ENCODE measurements at regions of chr18 and their contacts with region 1.

Region 1: DNA sequence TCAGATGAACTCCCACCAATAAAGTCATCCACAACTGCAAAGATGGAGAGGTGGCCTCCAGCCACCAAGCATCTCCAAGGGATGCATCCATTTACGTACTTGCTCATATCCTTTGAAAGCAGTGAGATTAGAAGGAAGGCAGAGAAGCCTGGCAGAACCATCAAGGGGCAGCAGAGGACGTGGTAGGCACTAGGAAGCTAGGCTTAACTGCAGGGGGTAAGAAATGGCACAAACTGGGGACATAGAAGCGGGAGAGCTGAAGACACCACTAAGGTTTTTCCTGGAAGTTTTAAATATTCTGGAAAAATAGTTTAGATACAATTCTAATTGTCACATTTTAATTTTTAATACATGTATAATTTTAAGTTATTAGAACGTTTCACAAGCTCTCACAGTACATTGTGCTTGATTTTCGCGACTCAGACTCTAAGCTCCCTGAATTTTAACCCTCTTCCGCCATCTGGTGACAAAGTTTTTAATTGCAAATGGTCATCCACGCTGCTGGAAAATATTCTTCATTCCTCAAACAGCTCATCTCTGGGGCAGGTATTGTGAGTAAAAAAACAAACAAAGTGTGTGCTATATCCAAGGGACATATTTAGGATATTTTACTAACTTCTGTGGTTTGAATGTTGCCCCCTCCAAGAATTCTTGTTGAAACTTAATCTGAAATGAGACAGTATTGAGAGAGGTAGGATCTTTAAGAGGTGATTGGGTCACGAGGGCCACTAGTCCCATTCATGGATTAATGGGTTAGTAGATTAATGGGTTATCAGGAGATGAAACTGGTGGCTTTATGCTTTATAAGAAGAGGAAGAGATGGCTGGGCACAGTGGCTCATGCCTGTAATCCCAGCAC is 1.6 kb upstream of the PSTPIP2 start:
- DNase-seq: peak; percentile 75 to 84 (median 77)
- H3K4me3 ChIP-seq: peak overlapping the region in 2 of 7 experiments; percentile 1 to 31
- H3K27ac ChIP-seq: no peak overlapping the region
- H3K4me1 ChIP-seq: peaks cover 2 to 41% (median 33%) of the 10 kb centered on the region in 4 experiments
- H3K27me3 ChIP-seq: no peaks in the 10 kb centered on the region

Region 2: DNA sequence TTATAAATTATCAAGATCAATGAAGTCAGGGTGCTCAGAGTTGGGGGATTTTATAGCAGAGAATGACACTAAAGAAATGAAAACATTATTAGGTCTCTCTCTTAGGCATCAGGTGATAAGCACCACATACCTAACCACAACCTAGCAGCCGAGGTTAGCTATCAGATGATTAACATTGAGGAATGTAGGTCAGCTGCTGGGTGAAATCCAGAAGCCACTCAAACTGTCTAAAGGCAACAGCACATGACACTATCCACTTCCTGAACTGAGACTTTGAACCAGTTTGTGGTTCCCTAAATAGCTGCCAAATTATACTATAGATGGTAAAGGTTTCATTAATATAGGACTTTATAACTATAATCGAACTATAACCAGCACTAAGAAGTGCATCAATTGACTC is 111.2 kb before region 1 on chr18:
- CTCF ChIA-PET with region 1: interaction called, 11 read pairs
- POLR2A ChIA-PET with region 1: no interaction called
- DNase-seq: peak; percentile 48 to 93 (median 88)
- H3K4me3 ChIP-seq: peak overlapping the region in 2 of 7 experiments; percentile 11 to 38
- H3K27ac ChIP-seq: peak overlapping the region in 1 of 2 experiments; percentile 69
- H3K4me1 ChIP-seq: peaks cover 10 to 30% (median 21%) of the 10 kb centered on the region in 4 experiments
- H3K27me3 ChIP-seq: no peaks in the 10 kb centered on the region

Region 3: DNA sequence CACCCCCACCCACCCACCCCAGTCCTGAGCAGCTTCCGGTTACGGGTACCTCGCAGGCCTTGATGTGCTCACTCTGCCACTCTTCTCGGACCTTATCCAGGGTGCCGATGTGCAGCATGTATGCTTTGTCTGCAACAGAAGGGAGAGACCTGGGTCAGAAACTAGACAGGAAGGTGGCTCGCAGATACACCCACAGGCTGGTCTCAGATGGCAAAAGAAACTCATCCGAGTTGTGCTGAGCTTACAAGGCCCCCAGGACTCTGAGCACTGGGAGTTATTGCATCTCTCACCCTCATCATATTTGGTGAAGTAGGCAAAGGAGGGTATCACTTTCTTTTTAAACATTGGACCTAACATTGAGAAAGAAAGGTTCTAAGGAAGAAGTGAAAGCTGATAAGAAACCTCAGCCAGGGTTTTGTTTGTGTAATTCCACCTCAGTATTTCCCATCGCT is 76.0 kb before region 1 on chr18:
- CTCF ChIA-PET with region 1: interaction called, 14 read pairs
- POLR2A ChIA-PET with region 1: no interaction called
- DNase-seq: peak; percentile 36 to 74 (median 69)
- H3K4me3 ChIP-seq: peak overlapping the region in 2 of 7 experiments; percentile 39 to 55
- H3K27ac ChIP-seq: peak overlapping the region in 1 of 2 experiments; percentile 55
- H3K4me1 ChIP-seq: peaks cover 10 to 22% (median 13%) of the 10 kb centered on the region in 4 experiments
- H3K27me3 ChIP-seq: no peaks in the 10 kb centered on the region

Region 4: GRCh38 chr18:46035696-46036680 is 37.7 kb before region 1 on chr18:
- CTCF ChIA-PET with region 1: interaction called, 27 read pairs
- POLR2A ChIA-PET with region 1: no interaction called
- DNase-seq: no peak
- H3K4me3 ChIP-seq: no peak overlapping the region
- H3K27ac ChIP-seq: no peak overlapping the region
- H3K4me1 ChIP-seq: peaks cover 0 to 18% (median 11%) of the 10 kb centered on the region in 4 experiments
- H3K27me3 ChIP-seq: no peaks in the 10 kb centered on the region

Region 5: GRCh38 chr18:46060359-46060841 is 13.3 kb before region 1 on chr18:
- CTCF ChIA-PET with region 1: interaction called, 14 read pairs
- POLR2A ChIA-PET with region 1: interaction called, 4 read pairs
- DNase-seq: peak; percentile 87 to 95 (median 90)
- H3K4me3 ChIP-seq: peak overlapping the region in 2 of 7 experiments; percentile 8 to 11
- H3K27ac ChIP-seq: peak overlapping the region in 1 of 2 experiments; percentile 63
- H3K4me1 ChIP-seq: peaks cover 8 to 28% (median 20%) of the 10 kb centered on the region in 4 experiments
- H3K27me3 ChIP-seq: no peaks in the 10 kb centered on the region

Measured in common myeloid progenitor, CD34-positive (primary cell).